ENCODE measurements at regions of chr1 and their contacts with region 1.

Region 1: GRCh38 chr1:168421399-168422004 is 122.3 kb downstream of the XCL2 start:
- DNase-seq: no peak
- ATAC-seq: peak; percentile 74
- H3K4me3 ChIP-seq: no peak overlapping the region
- H3K27ac ChIP-seq: no peak overlapping the region
- H3K4me1 ChIP-seq: no peaks in the 10 kb centered on the region
- H3K27me3 ChIP-seq: no peaks in the 10 kb centered on the region; a peak in 2 of 4 replicates
- CTCF ChIP-seq: no peak
- EP300 ChIP-seq: no peak
- POLR2A ChIP-seq: no peak
- RAD21 ChIP-seq: no peak

Region 2: DNA sequence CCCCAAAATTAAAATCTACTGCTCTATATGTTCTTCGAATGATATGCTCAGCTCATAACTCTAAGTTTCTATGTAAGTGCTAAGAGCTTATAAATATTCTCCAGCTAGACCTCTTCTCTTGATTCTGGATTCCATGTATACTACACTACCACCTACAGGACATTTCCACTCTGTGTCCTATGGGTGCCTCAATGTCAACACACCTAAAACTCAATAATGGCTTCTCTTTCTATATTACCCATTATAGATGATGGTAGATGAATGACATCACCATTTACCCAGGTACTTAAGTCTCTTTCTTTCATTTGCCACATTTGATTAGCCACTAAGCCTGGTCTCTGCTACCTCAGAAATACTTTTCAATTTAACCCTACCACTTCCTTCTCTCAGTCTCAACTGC is 99.6 kb before region 1 on chr1:
- CTCF ChIA-PET with region 1: no interaction called
- POLR2A ChIA-PET with region 1: no interaction called
- RAD21 ChIA-PET with region 1: no interaction called
- SMC1A ChIA-PET with region 1: no interaction called
- in situ Hi-C with region 1: no loop called
- intact Hi-C with region 1: no loop called
- DNase-seq: no peak
- ATAC-seq: peak; percentile 84
- H3K4me3 ChIP-seq: no peak overlapping the region
- H3K27ac ChIP-seq: no peak overlapping the region
- H3K4me1 ChIP-seq: no peaks in the 10 kb centered on the region
- H3K27me3 ChIP-seq: no peaks in the 10 kb centered on the region
- CTCF ChIP-seq: peak; percentile 27 to 47 (median 37); a peak in 4 of 6 replicates
- EP300 ChIP-seq: no peak
- POLR2A ChIP-seq: no peak
- RAD21 ChIP-seq: peak; percentile 49

Region 3: DNA sequence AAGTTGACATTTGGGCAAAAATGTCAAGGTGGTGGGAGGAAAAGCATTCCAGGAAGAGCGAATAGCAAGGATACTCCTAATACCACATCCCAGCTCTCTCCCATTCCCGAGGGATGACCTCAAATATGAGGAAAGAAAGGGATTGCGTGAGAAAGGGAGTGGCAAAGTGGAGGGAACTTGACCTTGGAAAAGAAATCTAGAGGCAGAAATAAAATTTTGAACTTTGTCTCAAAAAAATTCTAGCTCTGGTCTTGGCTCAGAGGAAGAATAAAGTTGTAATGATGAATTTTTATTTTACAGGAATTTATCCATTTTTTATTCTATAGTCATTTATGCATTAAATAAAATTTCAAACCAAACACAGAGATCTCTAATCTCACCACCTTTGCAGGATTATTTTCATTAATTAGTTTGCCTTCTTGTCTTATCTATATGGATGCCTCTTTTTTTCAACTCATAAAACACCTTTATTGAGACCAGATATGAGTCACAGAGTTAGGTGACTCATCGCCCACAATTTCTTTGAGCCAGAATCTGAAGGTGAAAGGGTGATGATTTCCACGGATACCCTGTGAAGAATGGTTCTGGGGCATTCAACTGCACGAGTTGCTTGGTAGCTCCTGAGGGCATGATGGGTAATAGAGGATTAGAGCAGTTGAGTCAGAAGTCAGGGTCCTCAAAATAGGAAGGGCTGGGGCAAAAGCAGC is 12.8 kb before region 1 on chr1:
- CTCF ChIA-PET with region 1: interaction called, 4 read pairs
- POLR2A ChIA-PET with region 1: interaction called, 7 read pairs
- RAD21 ChIA-PET with region 1: interaction called, 3 read pairs
- SMC1A ChIA-PET with region 1: interaction called, 21 read pairs
- in situ Hi-C with region 1: no loop called
- intact Hi-C with region 1: no loop called
- DNase-seq: peak; percentile 42
- ATAC-seq: peak; percentile 89
- H3K4me3 ChIP-seq: no peak overlapping the region
- H3K27ac ChIP-seq: no peak overlapping the region
- H3K4me1 ChIP-seq: no peaks in the 10 kb centered on the region
- H3K27me3 ChIP-seq: no peaks in the 10 kb centered on the region
- CTCF ChIP-seq: no peak
- EP300 ChIP-seq: peak in 1 of 2 experiments; percentile 49; a peak in 1 of 4 replicates
- POLR2A ChIP-seq: no peak
- RAD21 ChIP-seq: no peak

Region 4: GRCh38 chr1:168433238-168433637 is 11.7 kb after region 1 on chr1:
- CTCF ChIA-PET with region 1: interaction called, 4 read pairs
- POLR2A ChIA-PET with region 1: interaction called, 3 read pairs
- RAD21 ChIA-PET with region 1: interaction called, 4 read pairs
- SMC1A ChIA-PET with region 1: interaction called, 51 read pairs
- in situ Hi-C with region 1: no loop called
- intact Hi-C with region 1: no loop called
- DNase-seq: no peak
- ATAC-seq: no peak
- H3K4me3 ChIP-seq: no peak overlapping the region
- H3K27ac ChIP-seq: no peak overlapping the region
- H3K4me1 ChIP-seq: no peaks in the 10 kb centered on the region
- H3K27me3 ChIP-seq: no peaks in the 10 kb centered on the region; a peak in 2 of 4 replicates
- CTCF ChIP-seq: no peak
- EP300 ChIP-seq: no peak
- POLR2A ChIP-seq: no peak
- RAD21 ChIP-seq: no peak